T-cell (primary cell): ENCODE measurements at regions of chr2 and their contacts with region 1.

Region 1: DNA sequence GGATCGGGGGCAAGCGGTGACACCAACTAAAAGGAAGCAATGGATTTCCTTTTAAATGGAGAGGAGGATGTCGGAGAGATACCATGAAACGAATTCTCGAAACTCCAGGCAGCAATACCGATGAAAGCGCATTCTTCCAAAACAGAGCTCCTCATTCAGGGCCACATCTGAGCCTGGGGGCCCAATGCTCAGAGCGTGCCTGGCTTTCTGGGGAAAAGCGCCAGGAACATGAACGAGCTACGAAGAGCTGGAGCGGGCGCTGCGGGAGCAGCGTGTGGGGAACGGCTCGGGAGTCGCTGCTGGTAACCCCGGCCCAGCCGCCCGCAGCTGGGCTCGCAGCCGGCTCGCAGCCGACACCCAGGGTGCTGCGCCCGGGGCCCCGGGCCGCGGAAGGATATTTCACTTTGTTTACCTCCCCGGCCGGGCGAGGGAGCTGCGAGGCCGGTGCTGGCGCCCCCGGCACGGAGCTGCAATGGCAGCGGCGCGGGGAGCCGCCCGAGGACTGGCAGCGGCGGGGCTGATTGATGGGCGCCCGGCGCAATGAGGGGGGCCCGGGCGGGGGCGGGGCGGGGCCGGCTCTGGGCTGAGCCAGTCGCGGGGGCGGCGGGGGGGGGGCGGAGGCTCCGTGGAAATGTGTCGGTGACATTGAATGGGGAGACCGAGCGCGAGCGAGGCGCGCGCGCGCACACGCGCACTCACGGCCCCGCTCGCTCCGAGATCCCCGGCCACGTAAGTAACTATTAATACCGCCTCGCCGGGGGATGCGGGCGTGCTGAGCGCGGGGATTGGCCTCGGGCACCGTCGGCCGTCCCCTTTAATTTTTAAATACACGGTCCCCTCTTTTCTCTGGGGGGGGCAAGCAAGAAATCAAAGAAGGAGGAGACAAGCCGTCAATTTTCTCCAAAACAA is at the start of gene TRIB2:
- DNase-seq: peak; percentile 84 to 95 (median 91)
- ATAC-seq: peak; percentile 82 to 87 (median 84)
- H3K4me3 ChIP-seq: peak within 1 kb of the TSS; percentile 95 to 99
- H3K4me3 Mint-ChIP-seq: peak within 1 kb of the TSS; percentile 95 to 99 (median 98)
- H3K27ac ChIP-seq: peak within 1 kb of the TSS; percentile 88
- H3K27ac Mint-ChIP-seq: peak within 1 kb of the TSS; percentile 98
- H3K4me1 ChIP-seq: peaks cover 25 to 26% of the 10 kb centered on the region in 2 experiments
- H3K4me1 Mint-ChIP-seq: peaks cover 59 to 64% (median 60%) of the 10 kb centered on the region in 3 donors
- H3K27me3 ChIP-seq: no peaks in the 10 kb centered on the region
- H3K27me3 Mint-ChIP-seq: no peaks in the 10 kb centered on the region
- total RNA-seq, gene TRIB2: 111 to 131 (median 121) TPM

Region 2: GRCh38 chr2:11863513-11864328 is 852.8 kb before region 1 on chr2:
- CTCF ChIA-PET with region 1: interaction called, 14 to 17 read pairs
- POLR2A ChIA-PET with region 1: no interaction called
- DNase-seq: peak; percentile 34 to 82 (median 57)
- ATAC-seq: peak; percentile 73 to 87 (median 82)
- H3K4me3 ChIP-seq: peak overlapping the region in 1 of 2 donors; percentile 18
- H3K4me3 Mint-ChIP-seq: peak overlapping the region in 2 of 3 donors; percentile 29 to 52
- H3K27ac ChIP-seq: no peak overlapping the region
- H3K27ac Mint-ChIP-seq: peak overlapping the region in 1 of 2 donors; percentile 19
- H3K4me1 ChIP-seq: peaks cover 0 to 17% of the 10 kb centered on the region in 2 experiments
- H3K4me1 Mint-ChIP-seq: peaks cover 14 to 36% (median 21%) of the 10 kb centered on the region in 3 donors
- H3K27me3 ChIP-seq: peaks cover 0 to 3% of the 10 kb centered on the region in 2 experiments
- H3K27me3 Mint-ChIP-seq: no peaks in the 10 kb centered on the region

Region 3: GRCh38 chr2:12728221-12728777 is 11.8 kb after region 1 on chr2:
- CTCF ChIA-PET with region 1: interaction called, 4 to 24 read pairs
- POLR2A ChIA-PET with region 1: interaction called, 3 to 4 read pairs
- DNase-seq: peak; percentile 36 to 86 (median 66)
- ATAC-seq: peak; percentile 80 to 90 (median 84)
- H3K4me3 ChIP-seq: peak overlapping the region; percentile 13 to 45
- H3K4me3 Mint-ChIP-seq: peak overlapping the region; percentile 49 to 75 (median 59)
- H3K27ac ChIP-seq: peak overlapping the region; percentile 47
- H3K27ac Mint-ChIP-seq: peak overlapping the region; percentile 88 to 94
- H3K4me1 ChIP-seq: peaks cover 37 to 79% of the 10 kb centered on the region in 2 experiments
- H3K4me1 Mint-ChIP-seq: peaks cover 91 to 98% (median 97%) of the 10 kb centered on the region in 3 donors
- H3K27me3 ChIP-seq: no peaks in the 10 kb centered on the region
- H3K27me3 Mint-ChIP-seq: no peaks in the 10 kb centered on the region

Region 4: DNA sequence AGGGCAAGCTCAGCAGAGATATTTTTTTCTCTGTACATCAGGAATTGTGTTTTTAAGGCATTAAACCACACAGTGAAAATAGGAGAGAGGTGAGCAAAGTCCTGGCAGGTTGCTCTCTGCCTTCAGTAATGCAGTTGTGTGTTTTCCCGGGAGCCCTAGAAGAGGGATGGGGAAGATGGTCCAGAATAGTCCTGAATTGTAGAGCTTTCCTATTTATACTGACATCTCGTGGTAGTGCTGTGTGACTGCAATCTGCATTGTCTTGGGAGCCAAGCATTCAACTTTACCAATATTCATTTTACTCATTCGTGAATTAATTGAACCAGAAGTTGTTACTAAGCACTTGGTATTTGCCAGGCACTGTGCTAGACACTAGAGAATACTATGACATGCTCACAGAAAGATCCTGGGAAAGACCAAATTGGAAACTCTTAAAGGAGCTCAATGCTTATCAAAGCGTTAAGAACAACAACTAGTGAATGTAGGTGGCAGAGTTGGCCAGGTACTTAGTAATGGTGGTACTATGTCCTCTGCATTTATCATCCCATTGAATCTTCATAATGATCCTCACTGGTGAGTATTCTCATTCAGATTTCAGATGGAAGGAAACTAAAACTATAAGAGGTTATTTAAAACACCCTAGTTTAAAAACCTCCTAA is 214.8 kb after region 1 on chr2:
- CTCF ChIA-PET with region 1: interaction called, 5 to 27 read pairs
- POLR2A ChIA-PET with region 1: interaction called in 1 of 2 experiments, 3 read pairs
- DNase-seq: peak in 5 of 35 experiments; percentile 0 to 45 (median 3)
- ATAC-seq: peak; percentile 43 to 67 (median 56)
- H3K4me3 ChIP-seq: no peak overlapping the region
- H3K4me3 Mint-ChIP-seq: no peak overlapping the region
- H3K27ac ChIP-seq: no peak overlapping the region
- H3K27ac Mint-ChIP-seq: no peak overlapping the region
- H3K4me1 ChIP-seq: peaks cover 3 to 5% of the 10 kb centered on the region in 2 experiments
- H3K4me1 Mint-ChIP-seq: peaks cover 7 to 15% (median 13%) of the 10 kb centered on the region in 3 donors
- H3K27me3 ChIP-seq: no peaks in the 10 kb centered on the region
- H3K27me3 Mint-ChIP-seq: peaks cover 0 to 8% of the 10 kb centered on the region in 2 donors